GM12878 (cell line): ENCODE measurements at regions of chr5 and their contacts with region 1.

Region 1: GRCh38 chr5:31825518-31826068 is 186.7 kb downstream of the PDZD2 start:
- DNase-seq: peak; percentile 8
- ATAC-seq: peak; percentile 86
- H3K4me3 ChIP-seq: no peak overlapping the region
- H3K27ac ChIP-seq: no peak overlapping the region
- H3K4me1 ChIP-seq: no peaks in the 10 kb centered on the region
- H3K27me3 ChIP-seq: no peaks in the 10 kb centered on the region
- CTCF ChIP-seq: peak; percentile 47 to 65 (median 59); a peak in 5 of 6 replicates
- EP300 ChIP-seq: no peak
- POLR2A ChIP-seq: no peak
- RAD21 ChIP-seq: peak; percentile 66

Region 2: DNA sequence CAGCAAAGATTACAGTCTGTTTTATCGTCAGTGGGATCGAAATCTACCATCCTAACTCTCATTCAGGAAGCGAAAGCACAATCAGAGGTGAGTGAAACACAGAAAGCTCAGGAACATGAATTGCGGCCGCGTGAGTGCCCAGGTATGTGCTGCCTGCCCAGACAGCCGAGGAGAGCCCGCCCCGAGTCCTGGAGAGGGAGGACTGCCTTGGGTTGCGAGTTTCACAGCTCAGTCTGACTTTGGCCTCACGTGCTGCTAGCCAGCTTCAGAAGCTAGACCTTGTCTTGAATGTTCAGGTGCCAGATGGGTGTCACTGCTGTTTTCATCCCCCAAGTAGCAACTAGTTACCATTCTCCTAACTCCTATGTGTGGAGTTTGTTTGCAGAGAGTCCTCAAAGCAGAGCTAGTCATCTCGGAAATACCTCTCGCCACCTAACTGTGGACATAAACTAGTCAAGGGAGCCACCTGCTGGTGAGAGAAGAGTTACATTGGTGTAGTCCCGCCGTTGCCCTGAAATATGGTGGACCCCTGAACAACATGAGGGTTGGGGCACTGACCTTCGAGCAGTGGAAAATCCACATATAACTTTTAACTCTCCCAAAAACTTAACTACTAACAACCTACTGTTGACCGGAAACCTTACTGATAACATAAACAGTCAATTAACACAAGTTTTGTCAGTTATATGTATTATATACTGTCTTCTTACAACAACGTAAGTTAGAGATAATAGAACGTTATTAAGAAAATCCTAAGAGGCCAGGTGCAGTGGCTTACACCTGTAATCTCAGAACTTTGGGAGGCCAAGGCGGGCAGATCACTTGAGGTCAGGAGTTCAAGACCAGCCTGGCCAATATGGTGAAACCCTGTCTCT is 267.6 kb after region 1 on chr5:
- CTCF ChIA-PET with region 1: interaction called, 27 read pairs
- POLR2A ChIA-PET with region 1: no interaction called
- RAD21 ChIA-PET with region 1: interaction called, 12 read pairs
- SMC1A ChIA-PET with region 1: interaction called, 7 read pairs
- in situ Hi-C with region 1: loop called (anchors 5 kb)
- intact Hi-C with region 1: loop called (anchors 1 kb)
- DNase-seq: peak; percentile 17
- ATAC-seq: peak; percentile 99
- H3K4me3 ChIP-seq: no peak overlapping the region
- H3K27ac ChIP-seq: no peak overlapping the region
- H3K4me1 ChIP-seq: no peaks in the 10 kb centered on the region
- H3K27me3 ChIP-seq: no peaks in the 10 kb centered on the region
- CTCF ChIP-seq: peak; percentile 67 to 83 (median 75)
- EP300 ChIP-seq: no peak
- POLR2A ChIP-seq: no peak
- RAD21 ChIP-seq: peak; percentile 77